Tibial artery (tissue), 4 donors: ENCODE measurements at regions of chr16 and their contacts with region 1.

Region 1: DNA sequence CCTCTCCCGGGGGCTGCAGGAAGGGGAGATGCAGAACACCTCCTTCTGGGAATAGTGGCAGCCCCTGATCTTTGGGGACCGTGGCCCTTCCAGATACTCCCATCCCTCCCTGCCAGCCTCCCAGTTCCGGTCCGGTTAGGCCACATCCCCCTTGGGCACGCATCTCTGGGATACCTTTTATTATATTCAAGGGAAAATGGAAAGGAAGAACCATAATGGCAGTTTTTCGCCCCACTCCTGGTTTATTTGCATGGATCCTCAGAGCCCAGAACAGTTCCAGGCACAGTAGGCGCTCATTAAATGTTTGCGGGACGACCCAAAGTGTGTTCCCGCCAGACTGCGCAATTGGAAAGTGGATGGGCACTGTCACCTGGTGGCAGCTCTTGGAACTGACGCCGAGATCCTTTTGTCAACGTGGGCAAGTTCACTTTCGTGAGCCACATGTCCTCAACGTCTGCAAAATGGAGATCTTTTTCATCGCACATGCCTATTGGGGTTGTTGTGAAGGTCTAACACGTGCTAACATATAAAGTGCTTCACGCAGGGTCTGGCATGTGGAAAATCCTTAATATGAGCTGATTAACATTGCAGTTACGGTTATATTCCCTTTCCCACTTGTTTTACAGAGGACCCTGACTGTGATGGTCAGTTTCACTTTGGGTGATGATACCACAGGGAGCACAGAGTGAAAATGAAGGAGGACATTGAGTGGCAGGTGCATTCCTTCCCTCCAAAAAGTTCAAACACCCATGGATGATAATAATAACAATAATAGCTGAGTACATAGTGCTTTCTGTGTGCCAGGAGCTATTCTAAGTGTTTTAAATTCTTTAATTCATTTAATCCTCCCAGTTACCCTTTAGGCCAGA is 1.7 kb upstream of the GPRC5B start:
- DNase-seq: peak; percentile 72 to 83
- H3K4me3 ChIP-seq: peak overlapping the region; percentile 49 to 59
- H3K27ac ChIP-seq: no peak overlapping the region
- H3K4me1 ChIP-seq: peaks cover 0 to 36% (median 30%) of the 10 kb centered on the region in 4 donors
- H3K27me3 ChIP-seq: peaks cover 0 to 41% of the 10 kb centered on the region in 2 donors
- CTCF ChIP-seq: peak; percentile 98 to 99

Region 2: GRCh38 chr16:19563377-19563776 is 322.9 kb before region 1 on chr16:
- intact Hi-C with region 1: loop called (anchors 5 kb)
- DNase-seq: no peak
- H3K4me3 ChIP-seq: no peak overlapping the region
- H3K27ac ChIP-seq: no peak overlapping the region
- H3K4me1 ChIP-seq: no peaks in the 10 kb centered on the region
- H3K27me3 ChIP-seq: no peaks in the 10 kb centered on the region
- CTCF ChIP-seq: no peak

Region 3: DNA sequence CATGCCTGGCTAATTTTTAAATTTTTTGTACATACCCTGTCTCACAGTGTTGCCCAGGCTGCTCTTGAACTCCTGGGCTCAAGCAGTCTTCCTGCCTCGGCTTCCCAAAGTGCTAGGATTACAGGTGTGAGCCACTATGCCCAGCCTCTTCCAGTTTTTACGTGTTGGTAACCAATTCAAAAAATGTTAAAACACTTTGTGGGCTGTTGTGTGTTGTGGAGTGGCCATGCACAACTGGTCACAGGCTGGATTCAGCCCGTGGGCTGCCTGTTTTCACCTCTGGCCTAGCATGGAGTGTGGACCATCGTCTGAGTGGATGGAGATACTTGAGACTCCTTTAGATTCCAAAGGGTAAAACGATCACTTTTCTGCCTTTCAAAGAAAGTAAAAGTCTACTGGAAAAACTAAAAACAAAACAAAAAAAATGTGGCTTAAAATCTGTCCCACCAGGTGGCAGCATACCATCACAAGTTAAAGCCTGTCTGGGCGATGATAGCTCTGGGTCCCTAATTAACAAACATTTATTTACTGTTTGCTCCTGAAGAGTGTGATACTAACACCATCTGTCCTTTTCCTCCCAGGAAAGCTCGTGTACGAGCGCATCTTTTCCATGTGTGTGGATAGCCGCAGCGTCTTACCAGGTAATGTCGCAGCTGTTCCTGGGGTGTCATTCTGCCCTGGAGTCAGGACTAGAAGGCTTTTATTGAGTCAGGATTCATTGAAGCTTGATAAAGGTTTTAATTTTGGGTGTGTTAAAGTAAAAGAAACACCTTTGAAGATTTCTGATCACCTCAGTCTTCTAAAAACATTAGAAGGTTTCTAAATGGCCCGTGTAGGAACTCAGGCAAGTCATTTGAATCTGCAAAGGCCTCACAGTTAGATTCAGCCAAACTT is 285.0 kb before region 1 on chr16:
- intact Hi-C with region 1: loop called (anchors 5 kb)
- DNase-seq: no peak
- H3K4me3 ChIP-seq: no peak overlapping the region
- H3K27ac ChIP-seq: no peak overlapping the region
- H3K4me1 ChIP-seq: no peaks in the 10 kb centered on the region
- H3K27me3 ChIP-seq: no peaks in the 10 kb centered on the region
- CTCF ChIP-seq: peak; percentile 36 to 37

Region 4: GRCh38 chr16:19666477-19666876 is 219.8 kb before region 1 on chr16:
- intact Hi-C with region 1: loop called (anchors 10 kb)
- DNase-seq: no peak
- H3K4me3 ChIP-seq: no peak overlapping the region
- H3K27ac ChIP-seq: no peak overlapping the region
- H3K4me1 ChIP-seq: peaks cover 0 to 5% (median 0%) of the 10 kb centered on the region in 4 donors
- H3K27me3 ChIP-seq: no peaks in the 10 kb centered on the region
- CTCF ChIP-seq: no peak

Region 5: GRCh38 chr16:19717771-19718602 is 168.3 kb before region 1 on chr16 and contains the starts of genes IQCK and KNOP1:
- intact Hi-C with region 1: loop called (anchors 10 kb)
- DNase-seq: peak; percentile 88 to 94
- H3K4me3 ChIP-seq: peak within 1 kb of the TSS; percentile 92 to 100
- H3K27ac ChIP-seq: peak within 1 kb of the TSS; percentile 79 to 83
- H3K4me1 ChIP-seq: peaks cover 0 to 27% (median 23%) of the 10 kb centered on the region in 4 donors
- H3K27me3 ChIP-seq: no peaks in the 10 kb centered on the region
- CTCF ChIP-seq: no peak

Region 6: DNA sequence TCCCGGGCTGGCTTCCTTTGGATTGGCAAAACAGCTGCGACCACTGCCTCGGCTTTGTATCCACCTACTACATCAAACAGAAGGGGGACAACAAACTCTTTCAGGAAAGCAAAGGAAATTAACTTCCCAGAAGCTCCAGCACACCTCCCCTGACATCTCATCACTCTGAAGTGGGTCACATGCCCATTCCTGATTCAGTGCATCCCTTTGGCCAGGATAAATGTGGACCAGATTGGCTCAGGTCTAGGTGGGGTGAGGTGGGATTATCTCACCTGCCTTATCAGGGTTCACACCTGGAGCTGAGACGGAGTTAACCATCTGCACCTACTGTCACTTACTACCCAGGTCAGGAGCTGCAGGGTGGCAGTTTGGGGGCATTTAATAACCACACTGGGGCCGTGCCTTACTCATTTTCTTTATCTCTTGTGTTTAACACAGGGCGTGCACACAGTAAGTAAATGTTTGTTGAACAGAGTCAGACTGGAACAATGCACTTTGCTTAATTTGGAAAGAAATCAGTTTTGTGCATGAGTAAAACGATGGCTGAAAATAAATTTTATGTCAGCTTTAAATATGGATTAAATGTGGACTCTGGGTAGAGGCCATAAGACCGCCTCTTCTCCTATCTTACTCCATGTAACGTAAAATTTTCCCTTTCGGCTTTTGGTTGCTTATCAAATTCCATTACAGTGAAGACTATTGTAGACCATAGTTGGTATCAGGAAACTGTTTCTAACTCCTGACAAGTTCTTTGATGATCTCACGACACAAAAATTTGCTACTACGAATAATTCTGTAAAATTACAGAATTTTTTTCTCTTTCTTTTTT is 132.3 kb before region 1 on chr16:
- intact Hi-C with region 1: loop called (anchors 5 kb)
- DNase-seq: no peak
- H3K4me3 ChIP-seq: no peak overlapping the region
- H3K27ac ChIP-seq: no peak overlapping the region
- H3K4me1 ChIP-seq: peaks cover 0 to 10% (median 0%) of the 10 kb centered on the region in 4 donors
- H3K27me3 ChIP-seq: no peaks in the 10 kb centered on the region
- CTCF ChIP-seq: no peak

Region 7: DNA sequence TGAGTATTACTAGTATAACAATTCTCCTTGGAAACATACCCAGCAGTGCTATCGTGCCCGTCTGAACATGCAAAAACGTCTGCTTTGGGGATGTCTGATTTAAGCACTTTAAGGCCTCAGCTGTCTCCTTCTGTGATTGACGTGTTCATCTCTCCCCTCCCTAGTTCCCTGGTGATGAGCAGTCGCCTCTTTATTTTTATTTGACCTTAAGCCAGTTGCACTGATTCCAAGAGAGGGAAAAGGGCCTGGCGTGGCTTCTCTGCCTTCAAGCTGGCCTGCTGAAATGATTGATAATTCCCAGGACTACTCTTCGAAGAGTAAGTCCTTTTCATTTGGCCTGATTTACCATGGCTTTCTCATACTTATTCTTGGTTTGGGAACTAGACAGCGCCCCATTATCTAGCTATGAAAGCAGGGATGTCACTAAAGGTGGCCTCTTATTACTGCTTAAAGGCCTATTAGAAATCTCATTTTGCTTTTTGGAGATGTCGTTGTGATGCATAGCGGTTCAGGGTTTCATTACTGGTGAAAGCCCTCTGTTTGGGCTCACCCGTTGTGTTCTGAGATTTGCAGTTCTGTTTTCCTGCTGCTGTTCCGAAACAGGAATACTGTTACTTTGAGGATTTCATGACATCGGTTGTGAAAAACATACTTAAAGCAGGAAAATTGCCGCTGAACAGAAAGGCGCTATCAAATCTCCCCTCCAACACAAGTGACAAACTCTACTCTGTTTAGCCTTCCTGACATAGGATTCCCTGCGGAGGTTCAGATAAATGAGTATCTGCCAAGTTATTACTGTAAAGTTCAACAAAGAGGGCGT is 102.7 kb before region 1 on chr16:
- intact Hi-C with region 1: no loop called
- DNase-seq: no peak
- H3K4me3 ChIP-seq: no peak overlapping the region
- H3K27ac ChIP-seq: no peak overlapping the region
- H3K4me1 ChIP-seq: no peaks in the 10 kb centered on the region
- H3K27me3 ChIP-seq: no peaks in the 10 kb centered on the region
- CTCF ChIP-seq: no peak

Region 8: DNA sequence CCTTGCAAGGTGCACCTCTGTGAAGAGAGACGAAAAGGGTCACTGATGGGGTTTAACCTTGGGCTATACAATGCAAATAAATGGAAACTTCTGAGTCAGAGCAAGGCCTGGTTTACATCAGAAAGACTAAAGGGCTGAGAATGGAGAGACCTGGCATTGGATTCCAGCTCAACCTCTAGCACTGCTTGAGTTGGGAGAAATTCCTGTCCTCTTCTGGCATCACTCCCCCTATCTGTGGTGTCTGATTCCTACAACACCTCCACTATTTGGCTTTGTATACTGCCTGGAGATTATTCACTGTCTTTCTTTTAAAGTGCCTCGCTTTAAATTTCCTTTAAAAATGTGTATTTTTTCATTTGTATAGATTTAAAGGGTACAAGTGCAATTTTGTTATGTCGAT is 118.6 kb after region 1 on chr16:
- intact Hi-C with region 1: no loop called
- DNase-seq: no peak
- H3K4me3 ChIP-seq: no peak overlapping the region
- H3K27ac ChIP-seq: no peak overlapping the region
- H3K4me1 ChIP-seq: no peaks in the 10 kb centered on the region
- H3K27me3 ChIP-seq: peaks cover 0 to 2% of the 10 kb centered on the region in 2 donors
- CTCF ChIP-seq: no peak